Right ventricle myocardium superior (tissue), 1 donor: ENCODE measurements at regions of chr22 and their contacts with region 1.

Region 1: GRCh38 chr22:28075358-28075981 is 156.4 kb upstream of the PITPNB start:
- DNase-seq: no peak
- ATAC-seq: peak; percentile 72

Region 2: GRCh38 chr22:28247667-28248363 is 172.3 kb after region 1 on chr22:
- intact Hi-C with region 1: loop called (anchors 10 kb)
- DNase-seq: no peak
- ATAC-seq: no peak